Prostate gland (tissue), 2 donors: ENCODE measurements at regions of chr14 and their contacts with region 1.

Region 1: GRCh38 chr14:102086972-102087761 is at the start of gene HSP90AA1:
- DNase-seq: peak; percentile 90
- H3K4me3 ChIP-seq: peak within 1 kb of the TSS; percentile 98 to 100
- H3K27ac ChIP-seq: peak within 1 kb of the TSS; percentile 100
- H3K4me1 ChIP-seq: peaks cover 5% of the 10 kb centered on the region
- H3K27me3 ChIP-seq: no peaks in the 10 kb centered on the region
- CTCF ChIP-seq: peak in 1 of 4 experiments; percentile 15
- POLR2A ChIP-seq: peak; percentile 97
- total RNA-seq, gene HSP90AA1: 423 to 540 TPM

Region 2: DNA sequence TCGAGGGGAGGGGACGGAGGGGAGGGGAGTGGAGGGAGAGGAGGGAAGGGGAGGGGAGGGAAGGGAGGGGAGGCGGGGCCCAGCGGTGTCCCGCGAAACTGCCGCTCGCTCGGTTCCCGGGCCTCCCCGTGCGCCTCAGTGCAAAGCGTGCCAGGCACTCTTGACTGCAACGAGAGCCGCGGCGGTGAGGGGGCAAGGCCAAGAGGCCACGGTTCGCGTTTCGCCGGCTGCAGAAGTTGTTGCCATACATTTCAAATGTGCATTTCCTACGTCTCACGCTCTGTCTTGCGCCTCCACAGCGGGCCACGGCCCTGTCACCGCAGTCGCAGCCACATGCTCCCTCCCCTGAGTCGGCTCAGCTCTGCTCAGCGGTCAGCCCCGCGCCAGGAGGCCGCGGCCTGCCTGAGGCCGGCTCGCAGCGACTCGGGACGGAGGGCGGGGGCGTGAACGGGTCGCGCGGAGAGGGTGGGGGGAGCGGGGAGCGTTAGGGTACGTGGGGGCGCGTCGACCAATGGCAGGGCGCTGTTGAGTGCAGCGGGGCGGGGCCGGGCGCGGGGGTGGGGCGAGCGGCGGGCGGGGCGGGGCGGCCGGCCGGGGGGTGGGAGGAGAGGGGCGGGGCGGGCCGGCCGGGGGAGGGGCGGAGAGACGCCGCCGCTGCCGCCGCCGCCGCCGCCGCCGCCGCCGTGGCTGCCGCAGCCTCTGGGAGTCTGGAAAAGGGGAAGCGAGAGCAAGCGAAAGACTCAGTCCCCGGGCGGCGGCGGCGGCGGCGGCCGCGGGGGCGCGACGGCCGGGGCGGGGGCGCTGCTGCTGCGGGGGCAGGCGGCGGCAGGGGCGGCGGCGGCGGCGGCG is 325.9 kb before region 1 on chr14 and contains the start of gene PPP2R5C:
- intact Hi-C with region 1: loop called (anchors 5 kb)
- DNase-seq: peak; percentile 89
- H3K4me3 ChIP-seq: peak within 1 kb of the TSS; percentile 83 to 84
- H3K27ac ChIP-seq: peak within 1 kb of the TSS; percentile 95 to 96
- H3K4me1 ChIP-seq: peaks cover 5% of the 10 kb centered on the region
- H3K27me3 ChIP-seq: no peaks in the 10 kb centered on the region
- CTCF ChIP-seq: peak in 1 of 4 experiments; percentile 23
- POLR2A ChIP-seq: peak; percentile 84
- total RNA-seq, gene PPP2R5C: 67.8 to 96.2 TPM

Region 3: GRCh38 chr14:101964297-101965144 is 122.6 kb before region 1 on chr14 and contains the start of gene DYNC1H1:
- intact Hi-C with region 1: loop called (anchors 5 kb)
- DNase-seq: peak; percentile 91
- H3K4me3 ChIP-seq: peak within 1 kb of the TSS; percentile 95 to 97
- H3K27ac ChIP-seq: peak within 1 kb of the TSS; percentile 90 to 96
- H3K4me1 ChIP-seq: no peaks in the 10 kb centered on the region
- H3K27me3 ChIP-seq: no peaks in the 10 kb centered on the region
- CTCF ChIP-seq: no peak
- POLR2A ChIP-seq: peak; percentile 99
- total RNA-seq, gene DYNC1H1: 366 to 616 TPM

Region 4: GRCh38 chr14:102050625-102051024 is 36.5 kb before region 1 on chr14:
- intact Hi-C with region 1: loop called (anchors 5 kb)
- DNase-seq: peak; percentile 36
- H3K4me3 ChIP-seq: no peak overlapping the region
- H3K27ac ChIP-seq: no peak overlapping the region
- H3K4me1 ChIP-seq: no peaks in the 10 kb centered on the region
- H3K27me3 ChIP-seq: no peaks in the 10 kb centered on the region
- CTCF ChIP-seq: no peak
- POLR2A ChIP-seq: no peak